ENCODE measurements at regions of chr10 and their contacts with region 1.

Region 1: DNA sequence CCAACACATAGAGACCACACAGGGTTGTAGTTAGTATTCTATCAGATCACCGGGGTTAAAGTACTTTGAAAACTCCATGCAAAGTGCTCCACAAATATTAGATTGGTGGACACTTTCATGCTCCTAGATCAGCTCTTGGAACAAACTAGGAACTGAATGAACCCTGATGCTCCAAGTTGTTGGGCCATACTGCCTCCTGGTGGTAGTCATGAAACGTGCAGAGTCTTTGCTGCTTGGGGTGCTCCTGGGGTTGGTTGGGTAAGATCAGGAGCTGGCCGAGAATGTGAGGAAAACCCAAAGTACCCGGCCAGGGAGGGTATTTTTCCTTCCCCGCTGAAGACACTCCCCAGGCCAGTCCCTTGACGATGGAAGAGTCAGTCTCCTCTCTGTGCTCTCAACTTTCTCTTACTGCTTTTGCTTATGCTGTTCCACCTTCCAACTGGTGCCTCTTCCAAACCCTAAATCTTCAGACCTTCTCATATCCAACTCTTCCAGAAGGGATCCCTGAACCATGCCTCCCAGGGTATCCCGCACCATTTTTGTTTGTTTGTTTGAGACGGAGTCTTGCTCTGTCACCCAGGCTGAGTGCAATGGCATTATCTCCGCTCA is 920 bp upstream of the RPEL1 start:
- DNase-seq: peak; percentile 47 to 67 (median 64)
- ATAC-seq: peak; percentile 96 to 98 (median 97)
- H3K4me3 ChIP-seq: no peak overlapping the region
- H3K27ac ChIP-seq: no peak overlapping the region
- H3K4me1 ChIP-seq: peaks cover 0 to 4% (median 0%) of the 10 kb centered on the region in 4 donors
- H3K27me3 ChIP-seq: no peaks in the 10 kb centered on the region
- CTCF ChIP-seq: peak; percentile 85 to 90 (median 87)
- POLR2A ChIP-seq: no peak

Region 2: GRCh38 chr10:102917962-102918816 is 326.6 kb before region 1 on chr10 and contains the start of gene CNNM2:
- intact Hi-C with region 1: loop called in 1 of 2 experiments (anchors 10 kb)
- DNase-seq: peak; percentile 100
- ATAC-seq: peak; percentile 92 to 96 (median 94)
- H3K4me3 ChIP-seq: peak within 1 kb of the TSS; percentile 88 to 95 (median 90)
- H3K27ac ChIP-seq: peak within 1 kb of the TSS; percentile 83 to 90 (median 85)
- H3K4me1 ChIP-seq: peaks cover 0 to 30% (median 5%) of the 10 kb centered on the region in 4 donors
- H3K27me3 ChIP-seq: no peaks in the 10 kb centered on the region
- CTCF ChIP-seq: no peak
- POLR2A ChIP-seq: peak; percentile 50
- total RNA-seq, gene CNNM2: 5.2 to 7.6 (median 6.5) TPM

Region 3: GRCh38 chr10:103030649-103031048 is 214.1 kb before region 1 on chr10:
- intact Hi-C with region 1: no loop called
- DNase-seq: no peak
- ATAC-seq: no peak
- H3K4me3 ChIP-seq: no peak overlapping the region
- H3K27ac ChIP-seq: no peak overlapping the region
- H3K4me1 ChIP-seq: no peaks in the 10 kb centered on the region
- H3K27me3 ChIP-seq: no peaks in the 10 kb centered on the region
- CTCF ChIP-seq: no peak
- POLR2A ChIP-seq: no peak

Region 4: GRCh38 chr10:103367782-103368518 is 123.2 kb after region 1 on chr10 and contains the start of gene TAF5:
- intact Hi-C with region 1: no loop called
- DNase-seq: peak; percentile 92 to 94 (median 93)
- ATAC-seq: peak; percentile 84 to 91 (median 88)
- H3K4me3 ChIP-seq: peak within 1 kb of the TSS; percentile 90 to 98 (median 91)
- H3K27ac ChIP-seq: peak within 1 kb of the TSS; percentile 73 to 88 (median 76)
- H3K4me1 ChIP-seq: peaks cover 0 to 6% (median 0%) of the 10 kb centered on the region in 4 donors
- H3K27me3 ChIP-seq: no peaks in the 10 kb centered on the region
- CTCF ChIP-seq: peak in 1 of 4 donors; percentile 17
- POLR2A ChIP-seq: peak; percentile 85
- total RNA-seq, gene TAF5: 1.5 to 2.5 (median 2.2) TPM

Measured in right lobe of liver (tissue), 6 donors.